ENCODE measurements at regions of chrX and their contacts with region 1.

Region 1: GRCh38 chrX:45322382-45322781 is 121.7 kb upstream of the DIPK2B start:
- DNase-seq: peak; percentile 34
- H3K4me3 ChIP-seq: no peak overlapping the region
- H3K27ac ChIP-seq: no peak overlapping the region
- H3K4me1 ChIP-seq: peaks cover 0 to 4% (median 0%) of the 10 kb centered on the region in 4 donors
- H3K27me3 ChIP-seq: no peaks in the 10 kb centered on the region
- CTCF ChIP-seq: peak; percentile 36 to 49 (median 41)
- EP300 ChIP-seq: no peak
- POLR2A ChIP-seq: no peak

Region 2: DNA sequence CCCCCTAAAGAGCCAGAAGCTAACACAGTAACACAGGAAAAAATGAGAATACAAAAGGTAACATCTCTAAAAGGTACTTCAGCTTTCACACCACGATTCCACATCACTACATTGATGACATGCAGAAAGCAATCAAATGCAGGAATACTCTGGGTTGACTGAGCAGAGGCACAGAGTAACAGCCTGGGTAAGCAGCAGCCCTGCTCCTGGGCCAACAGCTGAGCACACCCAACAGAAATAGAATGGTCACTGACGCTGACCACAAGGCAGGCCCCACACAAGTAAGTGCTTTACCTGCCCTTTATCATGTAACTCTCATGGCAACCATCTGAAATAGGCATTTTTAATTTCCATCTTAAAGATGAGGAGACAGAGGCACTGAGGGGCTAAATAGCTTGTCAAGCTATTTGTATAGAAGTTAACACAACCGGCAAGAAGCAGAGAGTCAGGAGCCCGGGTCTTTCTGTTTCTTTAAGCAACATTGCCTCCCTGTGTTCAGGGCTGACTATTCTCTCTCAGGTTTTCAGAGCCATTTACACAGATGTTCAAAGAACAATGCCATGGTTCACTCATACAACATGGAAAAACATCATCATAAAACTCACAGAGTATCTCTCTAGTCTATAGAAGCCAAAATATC is 1054.0 kb after region 1 on chrX:
- in situ Hi-C with region 1: loop called in 1 of 4 experiments (anchors 25 kb)
- intact Hi-C with region 1: no loop called
- DNase-seq: peak; percentile 13
- H3K4me3 ChIP-seq: no peak overlapping the region
- H3K27ac ChIP-seq: no peak overlapping the region
- H3K4me1 ChIP-seq: no peaks in the 10 kb centered on the region
- H3K27me3 ChIP-seq: no peaks in the 10 kb centered on the region
- CTCF ChIP-seq: peak in 3 of 5 experiments; percentile 11 to 32 (median 12)
- EP300 ChIP-seq: no peak
- POLR2A ChIP-seq: no peak

Region 3: DNA sequence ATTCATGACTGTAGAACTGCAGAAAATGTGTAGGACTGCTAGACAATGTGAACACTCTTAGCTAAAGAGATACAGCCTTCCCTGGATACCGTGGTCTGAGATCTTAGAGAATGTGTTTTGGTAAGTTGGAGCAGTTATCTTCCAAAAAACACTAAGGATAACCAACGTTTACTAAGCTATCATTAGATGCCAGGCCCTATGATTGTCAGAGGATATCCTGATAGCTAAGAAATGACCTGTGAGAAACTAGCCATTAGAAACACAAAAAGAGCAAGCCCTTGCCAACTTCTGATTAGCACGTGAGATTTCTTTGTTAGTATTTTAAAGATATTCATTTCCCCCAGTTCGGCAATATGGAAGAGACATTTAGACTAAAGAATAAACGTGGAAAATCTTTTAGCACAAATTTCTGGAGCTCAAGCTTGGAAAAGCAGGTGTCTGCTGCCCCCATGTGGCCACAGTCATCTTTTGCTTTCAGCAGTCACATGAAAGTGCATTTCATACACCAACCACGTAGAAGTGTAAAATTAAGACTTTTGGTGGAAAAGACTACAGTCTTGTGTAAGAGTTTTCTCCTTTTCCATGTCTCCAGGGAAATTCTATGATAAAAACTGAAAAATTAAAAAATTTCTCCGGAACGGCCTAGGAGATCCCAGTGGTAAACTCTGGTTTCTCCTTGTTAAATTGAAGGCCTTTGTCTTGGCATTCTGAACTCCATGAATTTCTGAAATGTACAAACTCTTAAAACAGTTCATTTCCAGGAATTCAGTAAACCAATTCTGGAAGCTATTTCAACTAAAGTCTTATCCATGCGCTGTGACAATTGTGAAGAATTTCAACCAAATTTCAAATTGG is 1086.4 kb after region 1 on chrX:
- in situ Hi-C with region 1: loop called in 2 of 4 experiments (anchors 25 kb)
- intact Hi-C with region 1: loop called (anchors 10 kb)
- DNase-seq: peak; percentile 78
- H3K4me3 ChIP-seq: no peak overlapping the region
- H3K27ac ChIP-seq: no peak overlapping the region
- H3K4me1 ChIP-seq: no peaks in the 10 kb centered on the region
- H3K27me3 ChIP-seq: no peaks in the 10 kb centered on the region
- CTCF ChIP-seq: peak; percentile 59 to 88 (median 67)
- EP300 ChIP-seq: no peak
- POLR2A ChIP-seq: no peak